ENCODE measurements at regions of chr1 and their contacts with region 1.

Region 1: DNA sequence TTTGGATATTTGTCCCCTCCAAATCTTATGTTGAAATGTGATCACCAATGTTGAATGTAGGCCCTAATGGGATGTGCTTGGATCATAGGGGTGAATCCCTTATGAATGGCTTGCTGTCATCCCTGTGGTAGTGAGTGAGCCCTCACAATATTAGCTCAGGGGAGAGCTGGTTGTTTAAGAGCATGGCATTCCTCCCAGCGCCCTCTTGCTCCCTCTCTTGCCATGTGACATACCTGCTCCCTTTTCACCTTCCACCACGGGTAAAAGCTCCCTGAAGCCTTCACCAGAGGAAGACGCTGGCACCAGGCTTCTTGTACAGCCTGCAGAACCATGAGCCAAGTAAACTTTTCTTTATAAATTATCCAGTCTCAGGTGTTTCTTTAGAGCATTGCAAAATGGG is 305.6 kb downstream of the KCTD3 start:
- DNase-seq: no peak
- H3K4me3 ChIP-seq: no peak overlapping the region
- H3K27ac ChIP-seq: no peak overlapping the region
- H3K4me1 ChIP-seq: no peaks in the 10 kb centered on the region
- H3K27me3 ChIP-seq: no peaks in the 10 kb centered on the region
- CTCF ChIP-seq: no peak
- POLR2A ChIP-seq: no peak

Region 2: GRCh38 chr1:215835951-215836350 is 36.7 kb before region 1 on chr1:
- CTCF ChIA-PET with region 1: no interaction called
- POLR2A ChIA-PET with region 1: no interaction called
- dilution Hi-C with region 1: no loop called
- intact Hi-C with region 1: no loop called
- DNase-seq: no peak
- H3K4me3 ChIP-seq: no peak overlapping the region
- H3K27ac ChIP-seq: no peak overlapping the region
- H3K4me1 ChIP-seq: no peaks in the 10 kb centered on the region
- H3K27me3 ChIP-seq: no peaks in the 10 kb centered on the region
- CTCF ChIP-seq: no peak
- POLR2A ChIP-seq: no peak

Region 3: DNA sequence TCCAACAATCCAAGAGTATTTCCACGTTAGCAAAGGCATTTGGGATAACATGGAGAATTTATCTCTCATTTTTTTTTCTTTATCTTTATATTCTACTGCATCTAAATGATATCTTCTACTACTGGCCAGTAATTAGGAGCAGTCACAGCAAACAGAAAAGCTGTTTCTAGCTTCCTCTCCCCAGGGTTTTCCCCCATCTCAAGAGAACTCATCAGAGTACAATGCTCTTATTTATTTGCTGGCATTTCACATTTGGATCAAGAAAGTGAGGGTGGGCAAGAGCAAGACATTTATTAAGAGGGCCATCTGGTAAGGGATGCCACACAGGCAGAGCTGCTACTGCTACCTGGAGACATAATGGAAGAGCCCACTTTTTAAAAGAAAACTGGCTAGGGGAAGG is 182.3 kb after region 1 on chr1:
- CTCF ChIA-PET with region 1: no interaction called
- POLR2A ChIA-PET with region 1: no interaction called
- dilution Hi-C with region 1: no loop called
- intact Hi-C with region 1: loop called (anchors 5 kb)
- DNase-seq: no peak
- H3K4me3 ChIP-seq: no peak overlapping the region
- H3K27ac ChIP-seq: no peak overlapping the region
- H3K4me1 ChIP-seq: no peaks in the 10 kb centered on the region
- H3K27me3 ChIP-seq: no peaks in the 10 kb centered on the region
- CTCF ChIP-seq: no peak
- POLR2A ChIP-seq: no peak